ENCODE measurements at regions of chr11 and their contacts with region 1.

Region 1: GRCh38 chr11:31487848-31488247 is 21.6 kb downstream of the IMMP1L start:
- DNase-seq: no peak
- ATAC-seq: no peak
- H3K4me3 ChIP-seq: no peak overlapping the region
- H3K27ac ChIP-seq: no peak overlapping the region
- H3K4me1 ChIP-seq: peaks cover 0 to 10% (median 0%) of the 10 kb centered on the region in 9 donors
- H3K27me3 ChIP-seq: no peaks in the 10 kb centered on the region
- CTCF ChIP-seq: peak in 7 of 9 donors; percentile 28 to 54 (median 45)

Region 2: GRCh38 chr11:31865606-31866300 is 377.9 kb after region 1 on chr11:
- intact Hi-C with region 1: loop called in 4 of 10 experiments (anchors 5 to 10 kb)
- DNase-seq: no peak
- ATAC-seq: no peak
- H3K4me3 ChIP-seq: no peak overlapping the region
- H3K27ac ChIP-seq: no peak overlapping the region
- H3K4me1 ChIP-seq: no peaks in the 10 kb centered on the region
- H3K27me3 ChIP-seq: peaks cover 0 to 71% (median 30%) of the 10 kb centered on the region in 7 donors
- CTCF ChIP-seq: no peak

Region 3: DNA sequence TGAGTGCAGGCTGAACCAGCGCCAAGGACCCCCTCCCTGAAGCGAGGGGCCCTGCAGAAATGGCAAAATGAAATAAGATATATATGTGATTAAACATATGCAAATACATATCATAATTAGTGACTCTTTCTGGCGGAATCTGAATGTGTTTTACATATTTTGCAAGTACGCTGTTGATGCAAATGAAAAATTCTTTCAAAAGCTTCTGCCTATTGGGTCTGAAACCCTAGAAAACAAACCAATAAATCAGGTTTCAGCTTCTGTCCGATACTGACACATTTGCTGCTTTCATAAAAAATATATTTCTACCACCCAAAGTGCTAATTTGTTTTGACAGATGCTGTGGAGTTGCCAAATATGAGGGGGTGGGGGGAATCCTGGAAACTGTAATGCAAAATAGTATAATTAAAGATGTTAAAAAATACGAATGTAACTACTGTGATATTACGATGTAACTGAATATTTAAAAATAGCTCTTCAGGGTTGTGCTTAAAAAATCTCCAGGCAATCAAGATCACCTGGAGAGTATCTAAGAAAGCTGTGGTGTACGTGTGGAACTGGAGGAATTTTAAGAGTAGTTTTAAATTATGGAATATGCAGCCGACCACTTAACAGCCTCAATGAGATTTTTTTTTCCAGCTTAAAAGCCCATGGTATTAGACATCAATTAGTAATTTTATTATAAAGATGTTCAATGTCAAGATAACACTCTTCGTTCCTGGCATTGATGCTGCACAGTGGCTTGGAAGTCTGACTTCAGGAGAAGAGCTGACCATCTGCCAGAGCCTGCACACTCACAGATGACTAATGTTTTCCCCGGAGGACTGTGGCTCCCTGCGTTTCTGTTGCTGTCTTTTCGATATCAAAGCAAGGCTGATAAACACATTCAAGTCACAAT is 480.9 kb after region 1 on chr11:
- intact Hi-C with region 1: loop called in 1 of 10 experiments (anchors 10 kb)
- DNase-seq: peak in 1 of 2 donors; percentile 29
- ATAC-seq: peak in 7 of 8 donors; percentile 43 to 92 (median 83)
- H3K4me3 ChIP-seq: peak overlapping the region in 1 of 10 donors; percentile 7
- H3K27ac ChIP-seq: no peak overlapping the region
- H3K4me1 ChIP-seq: peaks cover 0 to 24% (median 5%) of the 10 kb centered on the region in 9 donors
- H3K27me3 ChIP-seq: peaks cover 0 to 15% (median 0%) of the 10 kb centered on the region in 7 donors
- CTCF ChIP-seq: no peak

Measured in heart right ventricle (tissue), 16 donors.